HEK293 (cell line): ENCODE measurements at regions of chr5 and their contacts with region 1.

Region 1: DNA sequence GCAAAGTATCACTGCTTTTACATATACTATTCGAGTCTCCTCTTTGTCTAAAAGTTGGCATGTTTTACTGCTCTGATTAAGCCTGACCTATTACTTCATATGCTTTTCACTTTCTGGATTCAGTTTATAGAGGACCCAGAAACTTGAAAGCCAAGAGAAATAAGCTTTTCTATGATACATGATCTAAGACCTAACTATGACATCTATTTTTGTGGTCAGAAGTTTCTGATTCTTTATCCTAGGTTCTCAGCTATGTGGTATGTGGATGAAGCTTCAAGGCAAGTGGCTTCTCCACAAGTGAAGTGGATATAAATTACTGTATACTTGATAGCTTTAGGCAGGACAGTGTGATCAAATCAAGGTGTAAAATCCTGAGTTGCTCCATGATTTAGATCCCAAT is 6.3 kb downstream of the EDIL3 start:
- H3K4me3 ChIP-seq: no peak overlapping the region
- H3K27ac ChIP-seq: no peak overlapping the region
- H3K4me1 ChIP-seq: peaks cover 10% of the 10 kb centered on the region
- CTCF ChIP-seq: no peak

Region 2: GRCh38 chr5:84137541-84137940 is 240.9 kb before region 1 on chr5:
- CTCF ChIA-PET with region 1: no interaction called
- POLR2A ChIA-PET with region 1: no interaction called
- H3K4me3 ChIP-seq: no peak overlapping the region
- H3K27ac ChIP-seq: no peak overlapping the region
- H3K4me1 ChIP-seq: no peaks in the 10 kb centered on the region
- CTCF ChIP-seq: no peak

Region 3: GRCh38 chr5:84292788-84293653 is 85.4 kb before region 1 on chr5:
- CTCF ChIA-PET with region 1: interaction called, 4 read pairs
- POLR2A ChIA-PET with region 1: interaction called, 11 read pairs
- H3K4me3 ChIP-seq: no peak overlapping the region
- H3K27ac ChIP-seq: peak overlapping the region; percentile 96
- H3K4me1 ChIP-seq: peaks cover 25% of the 10 kb centered on the region
- CTCF ChIP-seq: 0 out of 2 replicates have a peak, but pooled peaks have one; percentile 8

Region 4: GRCh38 chr5:84343171-84343570 is 35.2 kb before region 1 on chr5:
- CTCF ChIA-PET with region 1: no interaction called
- POLR2A ChIA-PET with region 1: no interaction called
- H3K4me3 ChIP-seq: no peak overlapping the region
- H3K27ac ChIP-seq: no peak overlapping the region
- H3K4me1 ChIP-seq: peaks cover 7% of the 10 kb centered on the region; the same call in 1 of the 2 replicates
- CTCF ChIP-seq: no peak